Mucosa of descending colon (tissue), 3 donors: ENCODE measurements at regions of chr7 and their contacts with region 1.

Region 1: GRCh38 chr7:25908154-25908949 is 243.6 kb upstream of the NFE2L3 start:
- DNase-seq: no peak
- ATAC-seq: no peak
- H3K4me3 ChIP-seq: no peak overlapping the region
- H3K4me1 ChIP-seq: no peaks in the 10 kb centered on the region
- CTCF ChIP-seq: no peak

Region 2: DNA sequence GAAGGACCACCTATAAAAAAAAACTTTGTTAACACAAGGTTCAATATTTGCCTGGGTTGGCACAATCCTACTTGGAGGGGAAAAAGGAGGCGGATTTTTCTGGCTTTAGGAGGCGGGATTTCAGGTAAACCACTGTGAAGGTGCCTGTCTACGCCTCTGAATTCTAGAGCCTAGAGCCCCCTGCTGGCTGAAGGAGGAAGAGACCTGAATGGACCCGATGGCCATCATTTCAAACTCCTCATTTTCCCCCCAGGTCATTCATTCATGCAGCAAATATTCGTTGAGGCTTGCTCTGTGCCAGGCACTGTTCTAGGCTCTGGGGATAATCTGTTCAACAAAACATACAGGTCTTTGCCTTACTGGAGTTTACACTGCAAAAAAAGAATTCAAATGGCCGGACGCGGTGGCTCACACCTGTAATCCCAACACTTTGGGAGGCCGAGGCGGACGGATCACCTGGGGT is 153.4 kb after region 1 on chr7:
- intact Hi-C with region 1: loop called in 1 of 2 experiments (anchors 10 kb)
- DNase-seq: peak in 2 of 3 donors; percentile 75 to 93
- ATAC-seq: peak; percentile 94
- H3K4me3 ChIP-seq: no peak overlapping the region
- H3K4me1 ChIP-seq: no peaks in the 10 kb centered on the region
- CTCF ChIP-seq: peak; percentile 62